PC-9 (cell line): ENCODE measurements at regions of chr11 and their contacts with region 1.

Region 1: DNA sequence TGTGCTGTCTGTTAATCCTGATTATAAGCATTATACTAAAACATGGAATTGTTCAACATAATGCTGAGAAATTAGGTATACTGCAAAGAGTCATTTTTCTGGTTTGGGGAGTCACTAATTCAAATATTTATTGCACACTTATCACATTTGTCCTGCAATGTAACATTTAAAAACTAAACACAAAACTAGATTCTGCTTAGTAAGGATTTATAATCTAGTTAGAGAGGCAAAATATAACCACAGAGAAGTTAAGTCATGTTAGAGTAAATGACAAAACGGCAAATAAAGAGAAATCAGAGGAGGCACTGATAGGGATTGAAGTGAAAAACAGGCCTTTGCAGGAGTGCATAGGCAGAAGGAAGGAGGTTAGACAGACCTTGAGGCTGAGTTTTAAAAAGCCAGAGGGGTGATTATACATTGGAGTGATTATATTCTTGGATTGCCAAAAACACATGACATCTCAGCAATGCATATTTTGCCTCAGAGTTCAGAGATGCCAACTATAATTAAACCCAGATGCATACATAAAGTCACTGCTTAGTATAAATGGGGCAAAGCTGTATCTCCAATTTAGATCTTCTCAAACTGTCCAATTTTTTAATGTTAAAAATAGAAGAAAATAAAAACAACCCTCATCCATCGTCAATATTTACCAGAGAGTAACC is 49.7 kb downstream of the CCDC34 start:
- DNase-seq: no peak
- H3K4me3 ChIP-seq: no peak overlapping the region
- H3K27ac ChIP-seq: no peak overlapping the region
- H3K4me1 ChIP-seq: no peaks in the 10 kb centered on the region; the same call in 1 of the 2 replicates
- H3K27me3 ChIP-seq: no peaks in the 10 kb centered on the region
- CTCF ChIP-seq: no peak

Region 2: DNA sequence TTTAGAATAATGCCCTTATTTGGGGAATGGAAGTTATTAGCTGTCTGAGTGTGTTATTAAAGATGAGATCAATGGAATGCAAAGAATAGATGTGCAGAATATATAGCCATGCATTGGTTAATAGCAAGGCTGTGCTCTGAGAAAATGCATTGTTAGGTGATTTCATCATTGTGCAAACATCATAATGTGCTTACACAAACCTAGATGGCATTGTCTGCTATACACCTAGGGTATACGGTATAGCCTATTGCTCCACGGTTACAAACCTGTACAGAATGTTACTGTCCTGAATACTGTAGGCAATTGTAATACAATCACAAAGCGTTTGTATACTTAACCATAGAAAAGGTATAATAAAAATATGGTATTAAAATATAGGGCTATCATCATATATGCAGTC is 617.0 kb before region 1 on chr11:
- CTCF ChIA-PET with region 1: no interaction called
- POLR2A ChIA-PET with region 1: interaction called, 15 read pairs
- intact Hi-C with region 1: no loop called
- DNase-seq: no peak
- H3K4me3 ChIP-seq: no peak overlapping the region
- H3K27ac ChIP-seq: no peak overlapping the region
- H3K4me1 ChIP-seq: no peaks in the 10 kb centered on the region
- H3K27me3 ChIP-seq: no peaks in the 10 kb centered on the region
- CTCF ChIP-seq: no peak